Mucosa of descending colon (tissue), 3 donors: ENCODE measurements at regions of chr6 and their contacts with region 1.

Region 1: DNA sequence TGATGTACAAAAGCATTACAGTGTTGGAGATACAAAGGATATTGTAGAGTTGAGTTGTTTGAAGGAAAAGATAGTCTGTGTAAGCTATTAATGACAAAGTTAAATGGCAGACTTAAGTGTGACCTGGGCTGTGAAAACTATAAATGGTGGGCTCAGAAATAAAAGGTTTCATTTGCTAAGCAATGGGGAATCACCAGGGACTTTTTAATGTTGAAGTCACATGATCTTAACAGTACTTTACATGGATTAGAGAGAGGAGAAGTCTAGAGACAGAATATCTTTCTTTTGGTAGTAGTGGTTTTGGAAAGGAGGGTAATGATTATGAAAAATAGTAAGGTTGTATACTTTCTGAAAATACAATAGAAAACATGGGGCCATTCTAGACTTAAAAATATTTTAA is 67.1 kb downstream of the SCAF8 start:
- DNase-seq: no peak
- ATAC-seq: no peak
- H3K4me3 ChIP-seq: no peak overlapping the region
- H3K4me1 ChIP-seq: no peaks in the 10 kb centered on the region
- CTCF ChIP-seq: no peak

Region 2: GRCh38 chr6:154675602-154676088 is 124.7 kb before region 1 on chr6:
- intact Hi-C with region 1: loop called (anchors 5 kb)
- DNase-seq: peak; percentile 75 to 97 (median 89)
- ATAC-seq: peak; percentile 100
- H3K4me3 ChIP-seq: no peak overlapping the region
- H3K4me1 ChIP-seq: no peaks in the 10 kb centered on the region
- CTCF ChIP-seq: peak; percentile 98

Region 3: GRCh38 chr6:154996841-154997311 is 196.5 kb after region 1 on chr6:
- intact Hi-C with region 1: no loop called
- DNase-seq: no peak
- ATAC-seq: no peak
- H3K4me3 ChIP-seq: no peak overlapping the region
- H3K4me1 ChIP-seq: peaks cover 6% of the 10 kb centered on the region
- CTCF ChIP-seq: no peak